ENCODE measurements at regions of chr6 and their contacts with region 1.

Region 1: DNA sequence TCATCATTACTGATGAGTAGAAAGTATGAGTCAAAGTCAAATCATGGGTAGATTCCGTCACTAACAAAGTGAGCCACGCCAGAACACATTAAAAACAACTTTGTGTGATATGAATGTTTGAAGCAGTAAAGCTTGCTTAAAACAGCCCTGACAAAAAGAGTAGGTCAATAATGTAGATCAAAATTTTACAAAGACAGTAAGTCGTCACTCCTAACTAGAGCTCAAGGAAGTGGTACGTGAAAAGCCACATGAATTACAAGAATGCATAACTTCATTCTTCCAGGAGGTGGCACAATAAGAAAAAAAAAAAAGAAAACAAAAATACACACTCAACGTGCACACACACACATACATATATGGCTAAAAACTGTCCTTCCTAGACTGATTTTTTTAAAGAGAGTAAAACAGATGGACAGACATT is 69.9 kb downstream of the HACE1 start:
- DNase-seq: peak; percentile 66
- H3K4me3 Mint-ChIP-seq: peak overlapping the region; percentile 72
- H3K27ac Mint-ChIP-seq: peak overlapping the region; percentile 97
- H3K4me1 Mint-ChIP-seq: peaks cover 32% of the 10 kb centered on the region
- H3K27me3 Mint-ChIP-seq: no peaks in the 10 kb centered on the region

Region 2: GRCh38 chr6:104700371-104701186 is 89.2 kb before region 1 on chr6:
- intact Hi-C with region 1: no loop called
- DNase-seq: no peak
- H3K4me3 Mint-ChIP-seq: no peak overlapping the region
- H3K27ac Mint-ChIP-seq: no peak overlapping the region
- H3K4me1 Mint-ChIP-seq: peaks cover 23% of the 10 kb centered on the region
- H3K27me3 Mint-ChIP-seq: no peaks in the 10 kb centered on the region

Region 3: GRCh38 chr6:104809116-104809515 is 19.3 kb after region 1 on chr6:
- intact Hi-C with region 1: no loop called
- DNase-seq: no peak
- H3K4me3 Mint-ChIP-seq: no peak overlapping the region
- H3K27ac Mint-ChIP-seq: no peak overlapping the region
- H3K4me1 Mint-ChIP-seq: peaks cover 2% of the 10 kb centered on the region
- H3K27me3 Mint-ChIP-seq: no peaks in the 10 kb centered on the region

Region 4: GRCh38 chr6:104859225-104860146 is 69.7 kb after region 1 on chr6 and contains the start of gene HACE1:
- intact Hi-C with region 1: loop called (anchors 1 kb)
- DNase-seq: peak; percentile 97
- H3K4me3 Mint-ChIP-seq: peak within 1 kb of the TSS; percentile 98
- H3K27ac Mint-ChIP-seq: peak within 1 kb of the TSS; percentile 90
- H3K4me1 Mint-ChIP-seq: peaks cover 24% of the 10 kb centered on the region
- H3K27me3 Mint-ChIP-seq: no peaks in the 10 kb centered on the region
- total RNA-seq, gene HACE1: 18.6 and 21.3 TPM in 2 replicates

Region 5: GRCh38 chr6:105692626-105693215 is 902.9 kb after region 1 on chr6:
- intact Hi-C with region 1: no loop called
- DNase-seq: peak; percentile 36
- H3K4me3 Mint-ChIP-seq: no peak overlapping the region
- H3K27ac Mint-ChIP-seq: peak overlapping the region; percentile 3
- H3K4me1 Mint-ChIP-seq: peaks cover 4% of the 10 kb centered on the region
- H3K27me3 Mint-ChIP-seq: peaks cover 17% of the 10 kb centered on the region